ENCODE measurements at regions of chr3 and their contacts with region 1.

Region 1: DNA sequence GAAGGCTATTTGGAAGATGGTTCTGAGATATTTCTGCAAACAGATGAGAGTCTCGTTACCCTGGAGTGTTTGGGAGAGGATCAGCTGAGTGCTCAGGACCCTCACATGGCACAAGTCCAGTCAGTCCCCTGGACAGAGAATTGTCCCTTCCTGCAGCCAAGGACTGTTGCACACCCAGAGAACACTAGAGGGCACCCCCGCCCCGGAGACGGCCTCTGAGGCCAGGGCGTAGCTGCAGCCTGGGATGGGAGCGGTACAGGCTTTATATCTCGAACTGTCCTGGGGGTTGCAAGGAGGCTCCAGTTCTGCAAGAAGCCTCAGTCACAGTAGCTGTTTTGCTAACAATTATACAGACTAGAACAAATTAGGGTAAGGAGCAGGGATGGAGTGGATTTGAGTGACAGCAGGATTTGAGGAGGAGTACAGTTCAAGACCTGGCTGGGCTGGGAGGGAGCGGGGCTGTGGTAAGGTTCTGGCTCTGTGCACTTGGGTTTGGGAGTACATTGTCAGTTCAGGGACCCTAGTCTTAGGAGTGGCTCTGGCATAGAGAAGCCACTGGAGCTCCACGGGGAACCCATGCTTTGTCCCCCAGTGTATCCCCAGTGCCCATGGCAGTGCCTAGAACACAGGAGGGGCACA is 67.6 kb upstream of the HACD2 start:
- DNase-seq: peak; percentile 83
- ATAC-seq: peak; percentile 89 to 94

Region 2: DNA sequence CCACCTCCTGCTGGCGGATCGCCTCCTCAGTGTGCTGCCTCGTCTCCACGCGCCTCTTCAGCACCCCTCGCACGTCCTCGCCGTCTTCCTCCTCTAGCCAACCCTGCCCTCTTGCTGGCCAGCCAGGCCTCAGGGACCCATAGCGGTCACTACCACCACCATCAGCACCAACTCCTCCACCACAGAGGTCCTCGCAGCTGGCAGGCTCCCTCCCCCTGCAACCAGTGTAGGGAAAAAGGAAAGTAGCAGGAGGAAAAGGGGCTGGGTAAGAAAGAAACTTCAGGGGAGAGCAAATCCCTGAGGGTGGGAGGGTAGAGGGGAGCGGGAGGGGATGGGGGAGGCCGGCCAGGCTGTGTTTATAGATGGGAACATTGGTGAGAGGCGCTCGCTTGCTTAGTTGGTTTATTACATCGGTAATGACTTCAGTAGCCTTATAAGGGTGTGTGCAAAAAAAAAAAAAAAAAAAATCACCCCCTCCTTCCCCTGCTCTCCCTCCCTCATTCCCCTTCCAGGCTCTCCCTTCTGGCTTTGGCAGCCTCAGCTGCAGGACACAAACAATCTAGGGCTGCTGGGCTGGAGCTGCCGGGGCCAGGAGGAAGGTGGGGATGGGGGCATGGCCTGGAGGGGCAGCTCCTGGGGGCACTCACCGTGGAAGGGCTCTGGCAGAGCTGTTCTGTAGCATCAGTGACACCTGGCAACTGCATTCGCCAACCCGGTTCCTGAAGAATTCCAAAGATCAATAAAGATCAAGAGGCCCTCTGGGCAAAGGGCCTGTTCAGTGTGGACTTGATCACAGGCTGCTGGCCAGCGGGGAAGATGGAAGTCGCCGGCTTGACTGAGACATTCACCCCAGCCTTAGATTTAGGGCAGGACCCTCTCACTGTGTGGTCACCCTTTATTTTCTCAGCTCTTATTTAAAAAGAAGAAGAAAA is 48.6 kb after region 1 on chr3:
- intact Hi-C with region 1: loop called (anchors 1 to 5 kb)
- DNase-seq: no peak
- ATAC-seq: peak; percentile 13 to 64

Region 3: GRCh38 chr3:123723522-123724168 is 71.2 kb after region 1 on chr3:
- intact Hi-C with region 1: loop called (anchors 1 to 5 kb)
- DNase-seq: no peak
- ATAC-seq: peak; percentile 15 to 18

Measured in left cardiac atrium (tissue), 4 donors.